CD8-positive, alpha-beta T cell (primary cell): ENCODE measurements at regions of chr11 and their contacts with region 1.

Region 1: GRCh38 chr11:11901917-11902316 is 60.1 kb downstream of the USP47 start:
- DNase-seq: no peak
- ATAC-seq: no peak
- H3K4me3 ChIP-seq: no peak overlapping the region
- H3K4me3 Mint-ChIP-seq: no peak overlapping the region
- H3K27ac ChIP-seq: no peak overlapping the region
- H3K27ac Mint-ChIP-seq: no peak overlapping the region
- H3K4me1 ChIP-seq: no peaks in the 10 kb centered on the region
- H3K4me1 Mint-ChIP-seq: no peaks in the 10 kb centered on the region
- H3K27me3 ChIP-seq: no peaks in the 10 kb centered on the region
- H3K27me3 Mint-ChIP-seq: no peaks in the 10 kb centered on the region
- CTCF ChIP-seq: no peak

Region 2: DNA sequence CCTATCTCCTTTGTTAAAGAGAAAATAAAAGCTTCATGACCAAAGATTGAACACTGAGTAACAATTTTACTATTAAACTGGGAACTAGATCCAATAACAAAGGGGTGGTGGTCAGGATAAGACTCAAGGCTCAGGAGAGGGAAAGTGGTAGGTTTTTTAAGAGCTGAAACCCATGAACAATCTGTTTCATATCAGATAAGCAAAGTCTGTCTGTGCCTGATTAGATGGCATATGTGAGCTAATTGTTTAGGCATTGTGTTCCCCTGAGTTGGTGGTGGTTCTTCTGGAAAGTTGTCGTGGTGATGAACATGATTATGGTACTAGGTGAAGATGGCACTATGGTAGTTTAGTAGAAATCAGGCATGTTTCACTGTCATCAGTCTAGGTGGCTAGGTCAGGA is 35.7 kb before region 1 on chr11:
- CTCF ChIA-PET with region 1: no interaction called
- POLR2A ChIA-PET with region 1: no interaction called
- intact Hi-C with region 1: no loop called
- DNase-seq: no peak
- ATAC-seq: no peak
- H3K4me3 ChIP-seq: no peak overlapping the region
- H3K4me3 Mint-ChIP-seq: no peak overlapping the region
- H3K27ac ChIP-seq: no peak overlapping the region
- H3K27ac Mint-ChIP-seq: peak overlapping the region; percentile 18
- H3K4me1 ChIP-seq: peaks cover 44% of the 10 kb centered on the region
- H3K4me1 Mint-ChIP-seq: peaks cover 81% of the 10 kb centered on the region
- H3K27me3 ChIP-seq: no peaks in the 10 kb centered on the region
- H3K27me3 Mint-ChIP-seq: no peaks in the 10 kb centered on the region
- CTCF ChIP-seq: no peak

Region 3: DNA sequence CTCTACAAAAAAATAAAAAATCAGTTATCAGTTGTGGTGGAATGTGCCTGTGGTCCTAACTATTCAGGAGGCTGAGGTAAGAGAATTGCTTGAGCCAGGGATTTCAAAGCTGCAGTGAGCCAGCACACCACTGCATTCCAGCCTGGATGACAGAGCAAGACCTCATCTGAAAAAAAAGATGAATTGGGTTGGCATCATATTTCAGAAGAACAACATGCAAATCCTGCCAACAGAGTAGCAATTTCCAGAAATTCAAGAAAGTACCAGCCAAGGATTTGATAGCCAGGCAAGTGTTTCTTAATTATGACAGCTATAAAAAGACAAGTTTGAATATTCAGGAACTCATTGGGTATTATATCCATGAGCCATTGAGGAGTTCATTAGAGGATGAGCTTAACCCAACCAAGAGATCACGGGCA is 15.1 kb after region 1 on chr11:
- CTCF ChIA-PET with region 1: no interaction called
- POLR2A ChIA-PET with region 1: no interaction called
- intact Hi-C with region 1: loop called in 1 of 2 experiments (anchors 2 kb)
- DNase-seq: no peak
- ATAC-seq: no peak
- H3K4me3 ChIP-seq: no peak overlapping the region
- H3K4me3 Mint-ChIP-seq: no peak overlapping the region
- H3K27ac ChIP-seq: no peak overlapping the region
- H3K27ac Mint-ChIP-seq: no peak overlapping the region
- H3K4me1 ChIP-seq: no peaks in the 10 kb centered on the region
- H3K4me1 Mint-ChIP-seq: no peaks in the 10 kb centered on the region
- H3K27me3 ChIP-seq: no peaks in the 10 kb centered on the region
- H3K27me3 Mint-ChIP-seq: no peaks in the 10 kb centered on the region
- CTCF ChIP-seq: no peak

Region 4: GRCh38 chr11:11937957-11938356 is 36.0 kb after region 1 on chr11:
- CTCF ChIA-PET with region 1: no interaction called
- POLR2A ChIA-PET with region 1: no interaction called
- intact Hi-C with region 1: loop called (anchors 5 kb)
- DNase-seq: no peak
- ATAC-seq: no peak
- H3K4me3 ChIP-seq: no peak overlapping the region
- H3K4me3 Mint-ChIP-seq: no peak overlapping the region
- H3K27ac ChIP-seq: no peak overlapping the region
- H3K27ac Mint-ChIP-seq: no peak overlapping the region
- H3K4me1 ChIP-seq: no peaks in the 10 kb centered on the region
- H3K4me1 Mint-ChIP-seq: no peaks in the 10 kb centered on the region
- H3K27me3 ChIP-seq: no peaks in the 10 kb centered on the region
- H3K27me3 Mint-ChIP-seq: no peaks in the 10 kb centered on the region
- CTCF ChIP-seq: no peak